T-cell (primary cell): ENCODE measurements at regions of chr11 and their contacts with region 1.

Region 1: GRCh38 chr11:73995247-73995646 is 12.6 kb upstream of the UCP2 start:
- DNase-seq: peak in 5 of 35 experiments; percentile 31 to 87 (median 54)
- ATAC-seq: peak; percentile 73 to 81 (median 75)
- H3K4me3 ChIP-seq: peak overlapping the region; percentile 18 to 34
- H3K4me3 Mint-ChIP-seq: peak overlapping the region; percentile 70 to 78 (median 71)
- H3K27ac ChIP-seq: peak overlapping the region; percentile 98
- H3K27ac Mint-ChIP-seq: peak overlapping the region; percentile 96 to 99
- H3K4me1 ChIP-seq: peaks cover 59 to 62% of the 10 kb centered on the region in 2 experiments
- H3K4me1 Mint-ChIP-seq: peaks cover 72 to 81% (median 75%) of the 10 kb centered on the region in 3 donors
- H3K27me3 ChIP-seq: no peaks in the 10 kb centered on the region
- H3K27me3 Mint-ChIP-seq: no peaks in the 10 kb centered on the region

Region 2: DNA sequence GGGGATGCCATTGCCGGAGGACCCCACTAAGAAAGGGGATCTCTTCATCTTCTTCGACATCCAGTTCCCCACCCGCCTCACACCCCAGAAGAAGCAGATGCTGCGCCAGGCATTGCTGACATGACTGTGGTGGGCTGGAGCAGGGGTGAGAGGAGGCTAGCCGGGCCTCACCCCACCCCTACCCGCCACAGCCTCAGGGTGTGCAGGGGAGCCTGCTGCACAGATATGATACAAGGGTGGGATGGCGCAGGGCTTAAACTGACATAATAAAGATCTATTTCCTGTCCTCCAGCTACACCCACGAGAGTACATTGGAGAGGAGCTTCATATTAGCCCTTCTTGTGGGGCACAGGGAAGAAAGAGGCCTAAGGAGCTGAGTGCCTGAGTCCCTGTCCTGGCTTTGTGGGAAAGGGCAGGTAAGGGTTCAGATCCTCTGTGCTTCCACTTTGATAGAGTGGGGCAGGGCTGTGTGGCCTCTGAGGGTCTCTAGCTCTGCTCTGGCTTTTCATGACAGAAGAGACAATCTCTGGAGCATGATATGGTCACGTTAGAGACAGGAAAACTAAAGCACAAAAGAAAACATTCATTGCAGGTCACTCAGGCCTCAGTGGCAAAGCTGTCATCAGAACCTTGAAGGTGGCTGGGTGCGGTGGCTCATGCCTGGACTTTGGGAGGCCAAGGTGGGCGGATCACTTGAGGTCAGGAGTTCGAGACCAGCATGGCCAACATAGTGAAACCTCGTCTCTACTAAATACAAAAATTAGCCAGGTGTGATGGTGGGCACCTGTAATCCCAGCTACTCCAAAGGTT is 25.1 kb before region 1 on chr11:
- CTCF ChIA-PET with region 1: interaction called in 1 of 2 experiments, 3 read pairs
- POLR2A ChIA-PET with region 1: interaction called, 8 to 14 read pairs
- DNase-seq: peak in 34 of 35 experiments; percentile 28 to 72 (median 54)
- ATAC-seq: peak; percentile 34 to 40 (median 38)
- H3K4me3 ChIP-seq: no peak overlapping the region
- H3K4me3 Mint-ChIP-seq: peak overlapping the region in 1 of 3 donors; percentile 89
- H3K27ac ChIP-seq: peak overlapping the region; percentile 76
- H3K27ac Mint-ChIP-seq: peak overlapping the region; percentile 98 to 100
- H3K4me1 ChIP-seq: peaks cover 57 to 100% of the 10 kb centered on the region in 2 experiments
- H3K4me1 Mint-ChIP-seq: peaks cover 77 to 87% (median 84%) of the 10 kb centered on the region in 3 donors
- H3K27me3 ChIP-seq: no peaks in the 10 kb centered on the region
- H3K27me3 Mint-ChIP-seq: no peaks in the 10 kb centered on the region

Region 3: GRCh38 chr11:74011360-74012073 is 16.3 kb after region 1 on chr11:
- CTCF ChIA-PET with region 1: interaction called, 3 to 7 read pairs
- POLR2A ChIA-PET with region 1: interaction called, 9 to 24 read pairs
- DNase-seq: peak in 19 of 35 experiments; percentile 14 to 70 (median 32)
- ATAC-seq: peak; percentile 60 to 80 (median 63)
- H3K4me3 ChIP-seq: peak overlapping the region in 1 of 2 donors; percentile 25
- H3K4me3 Mint-ChIP-seq: peak overlapping the region; percentile 39 to 66 (median 59)
- H3K27ac ChIP-seq: peak overlapping the region; percentile 81
- H3K27ac Mint-ChIP-seq: peak overlapping the region; percentile 94 to 97
- H3K4me1 ChIP-seq: peaks cover 72 to 98% of the 10 kb centered on the region in 2 experiments
- H3K4me1 Mint-ChIP-seq: peaks cover 89 to 97% (median 96%) of the 10 kb centered on the region in 3 donors
- H3K27me3 ChIP-seq: no peaks in the 10 kb centered on the region
- H3K27me3 Mint-ChIP-seq: no peaks in the 10 kb centered on the region